CD14-positive monocyte (primary cell): ENCODE measurements at regions of chr13 and their contacts with region 1.

Region 1: DNA sequence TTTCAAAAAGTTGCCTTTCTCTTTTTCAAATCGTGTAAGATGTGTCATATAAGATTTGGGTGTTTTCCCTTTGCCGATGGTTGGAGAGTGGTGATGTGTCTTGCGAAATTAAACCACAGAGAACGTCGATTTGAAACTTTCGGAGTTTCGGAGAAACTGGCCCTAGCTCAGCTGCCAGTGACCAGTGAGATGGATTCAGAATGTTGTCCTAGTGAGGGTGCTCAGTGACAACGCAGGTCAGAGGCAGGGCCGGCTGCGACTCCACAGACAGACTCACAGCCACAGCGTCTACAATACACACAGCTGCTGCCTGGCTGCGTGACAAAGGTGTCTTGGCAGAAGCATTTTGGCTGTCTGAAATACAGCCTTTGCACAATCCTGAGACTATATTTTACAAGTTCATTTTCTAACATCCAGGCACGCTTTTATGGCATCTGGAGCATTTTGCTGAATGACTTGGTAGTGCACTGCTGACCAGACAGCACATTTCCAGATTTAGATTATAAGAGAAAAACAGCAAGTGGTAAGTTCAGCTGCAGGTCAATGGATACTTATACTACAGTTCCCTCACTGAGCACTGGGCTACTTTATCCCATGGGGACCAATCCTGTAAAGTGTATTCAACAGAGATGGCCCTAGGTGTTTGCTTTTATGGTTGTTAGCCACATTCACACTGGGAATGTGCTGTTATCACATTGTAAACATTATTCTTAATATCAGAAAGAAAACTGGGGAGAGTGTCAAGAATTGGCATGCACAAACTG is 207.5 kb downstream of the KCNRG start:
- DNase-seq: peak; percentile 94 to 99 (median 96)
- H3K4me3 ChIP-seq: peak overlapping the region in 1 of 3 experiments; percentile 13
- H3K4me3 Mint-ChIP-seq: peak overlapping the region; percentile 58 to 75
- H3K27ac ChIP-seq: peak overlapping the region; percentile 93 to 98
- H3K27ac Mint-ChIP-seq: peak overlapping the region; percentile 95 to 99 (median 98)
- H3K4me1 ChIP-seq: peaks cover 51 to 62% of the 10 kb centered on the region in 2 donors
- H3K4me1 Mint-ChIP-seq: peaks cover 69% of the 10 kb centered on the region
- H3K27me3 ChIP-seq: no peaks in the 10 kb centered on the region
- H3K27me3 Mint-ChIP-seq: no peaks in the 10 kb centered on the region
- CTCF ChIP-seq: no peak

Region 2: GRCh38 chr13:50071379-50071778 is 151.4 kb before region 1 on chr13:
- intact Hi-C with region 1: no loop called
- DNase-seq: no peak
- H3K4me3 ChIP-seq: no peak overlapping the region
- H3K4me3 Mint-ChIP-seq: no peak overlapping the region
- H3K27ac ChIP-seq: peak overlapping the region in 1 of 2 donors; percentile 73
- H3K27ac Mint-ChIP-seq: peak overlapping the region in 4 of 7 donors; percentile 37 to 78 (median 49)
- H3K4me1 ChIP-seq: peaks cover 5 to 21% of the 10 kb centered on the region in 2 donors
- H3K4me1 Mint-ChIP-seq: peaks cover 36% of the 10 kb centered on the region
- H3K27me3 ChIP-seq: no peaks in the 10 kb centered on the region
- H3K27me3 Mint-ChIP-seq: no peaks in the 10 kb centered on the region
- CTCF ChIP-seq: no peak

Region 3: DNA sequence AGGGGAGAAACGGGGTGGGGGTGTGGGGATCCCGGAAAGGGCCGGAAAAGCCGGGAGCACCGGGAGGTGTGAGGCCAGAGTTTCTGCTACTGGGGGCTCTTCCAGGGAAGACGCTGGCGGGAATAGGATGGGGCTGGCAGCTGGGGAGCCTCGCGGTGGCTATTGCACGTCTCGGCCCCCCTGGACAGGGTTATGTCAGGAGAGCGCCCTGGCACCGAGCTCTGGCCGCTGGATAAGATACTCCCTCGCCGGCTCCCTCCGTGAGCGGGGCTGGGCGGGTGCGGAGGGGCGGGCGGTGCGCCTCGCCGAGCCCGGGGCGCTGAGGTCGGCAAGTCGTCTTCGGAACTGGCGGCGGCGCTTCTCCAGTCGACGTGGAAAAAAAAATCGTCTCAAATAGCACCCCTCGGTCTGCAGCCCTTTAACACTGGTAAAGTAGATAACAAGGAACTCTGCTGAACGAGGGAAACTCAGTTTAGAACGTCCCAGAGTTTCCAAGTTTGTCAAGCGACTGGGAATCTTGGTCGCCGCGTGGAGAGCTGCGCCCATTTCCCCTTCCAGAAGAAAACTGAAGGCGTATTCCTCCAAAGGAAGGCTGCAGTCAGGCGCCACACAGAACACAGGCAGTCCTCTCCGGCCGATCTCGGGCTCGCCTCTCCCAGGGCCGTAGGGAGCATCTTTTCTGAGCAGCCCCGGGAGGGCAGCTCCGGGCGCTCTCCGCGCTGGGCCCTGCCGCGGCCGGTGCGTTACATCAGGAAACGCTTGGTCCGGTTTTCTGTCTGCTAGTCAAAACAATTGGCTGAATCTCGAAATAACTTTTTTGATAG is 92.4 kb before region 1 on chr13:
- intact Hi-C with region 1: loop called (anchors 5 kb)
- DNase-seq: peak; percentile 60 to 73 (median 69)
- H3K4me3 ChIP-seq: peak overlapping the region; percentile 40 to 78 (median 49)
- H3K4me3 Mint-ChIP-seq: peak overlapping the region; percentile 88 to 92
- H3K27ac ChIP-seq: peak overlapping the region in 1 of 2 donors; percentile 46
- H3K27ac Mint-ChIP-seq: peak overlapping the region in 5 of 7 donors; percentile 48 to 88 (median 79)
- H3K4me1 ChIP-seq: peaks cover 63 to 71% of the 10 kb centered on the region in 2 donors
- H3K4me1 Mint-ChIP-seq: peaks cover 61% of the 10 kb centered on the region
- H3K27me3 ChIP-seq: peaks cover 20 to 69% of the 10 kb centered on the region in 2 donors
- H3K27me3 Mint-ChIP-seq: peaks cover 62 to 73% (median 65%) of the 10 kb centered on the region in 3 donors
- CTCF ChIP-seq: no peak

Region 4: GRCh38 chr13:50208826-50209335 is 13.9 kb before region 1 on chr13:
- intact Hi-C with region 1: loop called in 1 of 2 experiments (anchors 2 kb)
- DNase-seq: peak; percentile 78 to 89 (median 86)
- H3K4me3 ChIP-seq: peak overlapping the region; percentile 53 to 80 (median 57)
- H3K4me3 Mint-ChIP-seq: peak overlapping the region; percentile 89 to 98
- H3K27ac ChIP-seq: peak overlapping the region; percentile 93 to 94
- H3K27ac Mint-ChIP-seq: peak overlapping the region; percentile 95 to 100 (median 98)
- H3K4me1 ChIP-seq: peaks cover 25 to 31% of the 10 kb centered on the region in 2 donors
- H3K4me1 Mint-ChIP-seq: peaks cover 33% of the 10 kb centered on the region
- H3K27me3 ChIP-seq: no peaks in the 10 kb centered on the region
- H3K27me3 Mint-ChIP-seq: no peaks in the 10 kb centered on the region
- CTCF ChIP-seq: no peak

Region 5: GRCh38 chr13:50284540-50284939 is 61.8 kb after region 1 on chr13:
- intact Hi-C with region 1: loop called (anchors 10 kb)
- DNase-seq: peak; percentile 46 to 70 (median 53)
- H3K4me3 ChIP-seq: peak overlapping the region in 1 of 3 experiments; percentile 29
- H3K4me3 Mint-ChIP-seq: peak overlapping the region in 1 of 2 donors; percentile 21
- H3K27ac ChIP-seq: peak overlapping the region in 1 of 2 donors; percentile 68
- H3K27ac Mint-ChIP-seq: peak overlapping the region; percentile 75 to 91 (median 90)
- H3K4me1 ChIP-seq: peaks cover 48 to 53% of the 10 kb centered on the region in 2 donors
- H3K4me1 Mint-ChIP-seq: peaks cover 56% of the 10 kb centered on the region
- H3K27me3 ChIP-seq: no peaks in the 10 kb centered on the region
- H3K27me3 Mint-ChIP-seq: no peaks in the 10 kb centered on the region
- CTCF ChIP-seq: no peak

Region 6: GRCh38 chr13:51674279-51674678 is 1451.5 kb after region 1 on chr13:
- intact Hi-C with region 1: no loop called
- DNase-seq: no peak
- H3K4me3 ChIP-seq: no peak overlapping the region
- H3K4me3 Mint-ChIP-seq: no peak overlapping the region
- H3K27ac ChIP-seq: peak overlapping the region in 1 of 2 donors; percentile 36
- H3K27ac Mint-ChIP-seq: peak overlapping the region in 3 of 7 donors; percentile 4 to 6 (median 4)
- H3K4me1 ChIP-seq: peaks cover 7 to 19% of the 10 kb centered on the region in 2 donors
- H3K4me1 Mint-ChIP-seq: peaks cover 19% of the 10 kb centered on the region
- H3K27me3 ChIP-seq: no peaks in the 10 kb centered on the region
- H3K27me3 Mint-ChIP-seq: peaks cover 0 to 2% (median 0%) of the 10 kb centered on the region in 3 donors
- CTCF ChIP-seq: no peak